K562 (cell line): ENCODE measurements at regions of chr10 and their contacts with region 1.

Region 1: GRCh38 chr10:103244663-103245271 is 920 bp upstream of the RPEL1 start:
- DNase-seq: peak; percentile 72 to 76 (median 74)
- ATAC-seq: peak; percentile 94
- H3K4me3 ChIP-seq: no peak overlapping the region
- H3K27ac ChIP-seq: no peak overlapping the region
- H3K4me1 ChIP-seq: no peaks in the 10 kb centered on the region
- H3K27me3 ChIP-seq: no peaks in the 10 kb centered on the region
- CTCF ChIP-seq: peak; percentile 71 to 84 (median 79)
- EP300 ChIP-seq: no peak
- POLR2A ChIP-seq: no peak
- RAD21 ChIP-seq: peak; percentile 81 to 91

Region 2: GRCh38 chr10:102729029-102730026 is 515.4 kb before region 1 on chr10:
- CTCF ChIA-PET with region 1: interaction called, 4 read pairs
- POLR2A ChIA-PET with region 1: no interaction called
- in situ Hi-C with region 1: no loop called
- intact Hi-C with region 1: loop called (anchors 5 kb)
- DNase-seq: peak; percentile 69 to 76 (median 70)
- ATAC-seq: peak; percentile 99
- H3K4me3 ChIP-seq: no peak overlapping the region
- H3K27ac ChIP-seq: no peak overlapping the region
- H3K4me1 ChIP-seq: peaks cover 0 to 5% of the 10 kb centered on the region in 2 experiments; a peak in 1 of 5 replicates
- H3K27me3 ChIP-seq: no peaks in the 10 kb centered on the region
- CTCF ChIP-seq: peak; percentile 79 to 86 (median 82)
- EP300 ChIP-seq: no peak
- POLR2A ChIP-seq: no peak
- RAD21 ChIP-seq: peak; percentile 87 to 89

Region 3: GRCh38 chr10:103069453-103070331 is 175.1 kb before region 1 on chr10:
- CTCF ChIA-PET with region 1: no interaction called
- POLR2A ChIA-PET with region 1: no interaction called
- in situ Hi-C with region 1: no loop called
- intact Hi-C with region 1: loop called (anchors 2 kb)
- DNase-seq: peak; percentile 34 to 69 (median 51)
- ATAC-seq: peak; percentile 84
- H3K4me3 ChIP-seq: no peak overlapping the region
- H3K27ac ChIP-seq: no peak overlapping the region
- H3K4me1 ChIP-seq: no peaks in the 10 kb centered on the region; a peak in 1 of 5 replicates
- H3K27me3 ChIP-seq: no peaks in the 10 kb centered on the region
- CTCF ChIP-seq: peak; percentile 64 to 74 (median 72)
- EP300 ChIP-seq: no peak
- POLR2A ChIP-seq: no peak
- RAD21 ChIP-seq: peak; percentile 81 to 91

Region 4: DNA sequence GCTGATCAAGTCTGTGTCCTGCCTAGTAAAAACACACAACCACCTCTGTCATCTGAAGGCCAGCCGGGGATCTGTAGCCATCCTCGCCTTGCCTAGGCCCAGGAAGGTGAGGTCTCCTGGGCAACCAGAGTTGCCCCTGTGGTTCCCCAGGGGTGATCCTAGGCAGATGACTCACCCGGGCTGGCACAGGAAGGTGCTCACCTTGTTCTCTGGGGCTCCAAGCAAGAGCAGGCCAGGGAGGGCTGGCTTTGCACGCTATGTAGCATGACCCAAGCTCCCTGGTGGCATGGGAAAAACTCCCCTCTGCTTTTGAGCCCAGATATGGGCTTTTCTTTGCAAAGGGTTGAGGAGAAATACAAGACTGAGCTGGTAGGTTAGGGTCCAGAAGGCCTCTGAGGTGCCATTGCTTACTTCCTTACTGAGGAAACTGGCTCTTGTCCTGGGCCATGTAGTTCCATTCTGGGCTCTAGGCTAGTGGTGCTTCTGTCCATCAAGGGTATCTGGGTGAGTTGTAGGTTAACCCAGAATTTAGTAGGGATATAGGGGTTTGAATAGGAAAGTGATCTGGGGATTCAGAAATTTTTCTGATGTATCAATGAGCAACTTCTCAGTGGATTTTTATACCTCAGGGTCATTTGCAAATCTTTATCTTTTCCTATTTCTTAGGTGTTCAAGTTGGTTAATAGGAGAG is 163.7 kb before region 1 on chr10:
- CTCF ChIA-PET with region 1: no interaction called
- POLR2A ChIA-PET with region 1: no interaction called
- in situ Hi-C with region 1: loop called (anchors 10 kb)
- intact Hi-C with region 1: no loop called
- DNase-seq: no peak
- ATAC-seq: no peak
- H3K4me3 ChIP-seq: no peak overlapping the region
- H3K27ac ChIP-seq: no peak overlapping the region
- H3K4me1 ChIP-seq: no peaks in the 10 kb centered on the region; a peak in 1 of 5 replicates
- H3K27me3 ChIP-seq: no peaks in the 10 kb centered on the region
- CTCF ChIP-seq: no peak
- EP300 ChIP-seq: no peak
- POLR2A ChIP-seq: 0 out of 2 replicates have a peak, but pooled peaks have one; percentile 16
- RAD21 ChIP-seq: no peak

Region 5: GRCh38 chr10:103192451-103193106 is 52.2 kb before region 1 on chr10:
- CTCF ChIA-PET with region 1: no interaction called
- POLR2A ChIA-PET with region 1: interaction called, 6 read pairs
- in situ Hi-C with region 1: no loop called
- intact Hi-C with region 1: loop called (anchors 2 kb)
- DNase-seq: peak in 2 of 4 experiments; percentile 41 to 80
- ATAC-seq: peak; percentile 80
- H3K4me3 ChIP-seq: peak overlapping the region; percentile 96
- H3K27ac ChIP-seq: peak overlapping the region; percentile 95
- H3K4me1 ChIP-seq: peaks cover 15 to 24% of the 10 kb centered on the region in 2 experiments
- H3K27me3 ChIP-seq: no peaks in the 10 kb centered on the region
- CTCF ChIP-seq: no peak
- EP300 ChIP-seq: no peak
- POLR2A ChIP-seq: peak; percentile 68
- RAD21 ChIP-seq: no peak